ENCODE measurements at regions of chr15 and their contacts with region 1.

Region 1: GRCh38 chr15:100627789-100628395 is 25.5 kb downstream of the ASB7 start:
- DNase-seq: peak; percentile 69
- H3K4me3 ChIP-seq: no peak overlapping the region
- H3K27ac ChIP-seq: no peak overlapping the region
- H3K4me1 ChIP-seq: no peaks in the 10 kb centered on the region
- H3K27me3 ChIP-seq: no peaks in the 10 kb centered on the region
- CTCF ChIP-seq: peak; percentile 82

Region 2: DNA sequence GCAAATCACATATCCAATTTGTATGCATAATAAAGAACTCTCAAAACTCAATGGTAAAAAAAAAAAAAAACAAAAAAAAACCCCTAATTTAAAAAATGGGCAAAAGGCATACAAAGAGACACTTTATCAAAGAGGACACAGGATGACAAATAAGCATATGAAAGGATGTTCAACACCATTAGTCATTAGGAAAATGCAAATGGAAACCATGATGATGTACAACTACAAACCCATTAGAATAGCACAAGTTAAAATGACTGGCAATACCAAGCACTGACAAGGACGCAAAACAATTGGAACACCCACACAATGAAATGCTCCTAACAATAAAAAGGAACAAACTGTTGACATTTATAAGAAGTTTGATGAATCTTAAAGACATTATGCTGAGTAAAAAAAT is 222.7 kb before region 1 on chr15:
- intact Hi-C with region 1: no loop called
- DNase-seq: no peak
- H3K4me3 ChIP-seq: no peak overlapping the region
- H3K27ac ChIP-seq: no peak overlapping the region
- H3K4me1 ChIP-seq: no peaks in the 10 kb centered on the region
- H3K27me3 ChIP-seq: no peaks in the 10 kb centered on the region
- CTCF ChIP-seq: no peak

Region 3: GRCh38 chr15:100759698-100760356 is 131.9 kb after region 1 on chr15:
- intact Hi-C with region 1: no loop called
- DNase-seq: peak; percentile 30
- H3K4me3 ChIP-seq: no peak overlapping the region
- H3K27ac ChIP-seq: peak overlapping the region; percentile 47
- H3K4me1 ChIP-seq: no peaks in the 10 kb centered on the region
- H3K27me3 ChIP-seq: no peaks in the 10 kb centered on the region
- CTCF ChIP-seq: no peak

Region 4: DNA sequence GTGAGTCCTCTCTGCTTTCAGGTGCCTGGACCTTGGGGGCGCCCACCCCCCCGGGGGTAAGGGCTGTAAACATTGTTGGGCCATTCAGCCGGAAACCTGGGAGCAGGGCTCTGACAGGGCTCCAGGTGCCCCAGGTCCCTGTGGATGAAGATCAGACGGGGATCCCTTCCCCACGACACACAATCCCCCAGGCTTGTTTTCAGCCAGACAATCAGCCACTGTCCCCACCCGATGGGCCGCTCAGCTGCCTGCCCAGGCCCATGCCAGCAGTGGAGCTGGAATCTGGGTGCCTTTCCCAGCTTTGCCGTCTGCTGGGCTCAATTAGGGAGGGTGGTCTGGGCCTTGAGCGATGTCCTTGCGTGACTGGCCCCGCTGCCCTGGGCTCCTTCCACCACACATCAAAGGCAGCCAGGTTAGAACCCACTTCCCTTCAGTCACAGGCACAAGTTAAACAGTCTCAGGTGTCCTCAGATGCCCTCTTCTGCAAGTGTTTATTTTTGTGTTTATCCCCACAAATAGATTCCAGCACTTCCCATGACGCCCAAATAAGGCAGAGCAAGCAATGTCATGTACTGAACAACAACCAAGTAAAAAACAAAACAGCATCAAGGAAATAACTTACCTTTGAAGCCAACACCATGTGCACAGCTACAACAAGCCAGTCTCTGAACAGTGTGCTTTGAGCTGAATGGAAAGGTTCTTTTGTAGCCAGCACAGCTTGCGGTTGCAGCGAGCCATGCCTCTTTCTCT is 174.7 kb after region 1 on chr15:
- intact Hi-C with region 1: no loop called
- DNase-seq: peak; percentile 9
- H3K4me3 ChIP-seq: no peak overlapping the region
- H3K27ac ChIP-seq: no peak overlapping the region
- H3K4me1 ChIP-seq: no peaks in the 10 kb centered on the region
- H3K27me3 ChIP-seq: no peaks in the 10 kb centered on the region
- CTCF ChIP-seq: no peak

Region 5: GRCh38 chr15:100873029-100873677 is 245.3 kb after region 1 on chr15:
- intact Hi-C with region 1: loop called (anchors 5 kb)
- DNase-seq: peak; percentile 79
- H3K4me3 ChIP-seq: no peak overlapping the region
- H3K27ac ChIP-seq: no peak overlapping the region
- H3K4me1 ChIP-seq: no peaks in the 10 kb centered on the region
- H3K27me3 ChIP-seq: peaks cover 4% of the 10 kb centered on the region
- CTCF ChIP-seq: peak; percentile 82

Region 6: DNA sequence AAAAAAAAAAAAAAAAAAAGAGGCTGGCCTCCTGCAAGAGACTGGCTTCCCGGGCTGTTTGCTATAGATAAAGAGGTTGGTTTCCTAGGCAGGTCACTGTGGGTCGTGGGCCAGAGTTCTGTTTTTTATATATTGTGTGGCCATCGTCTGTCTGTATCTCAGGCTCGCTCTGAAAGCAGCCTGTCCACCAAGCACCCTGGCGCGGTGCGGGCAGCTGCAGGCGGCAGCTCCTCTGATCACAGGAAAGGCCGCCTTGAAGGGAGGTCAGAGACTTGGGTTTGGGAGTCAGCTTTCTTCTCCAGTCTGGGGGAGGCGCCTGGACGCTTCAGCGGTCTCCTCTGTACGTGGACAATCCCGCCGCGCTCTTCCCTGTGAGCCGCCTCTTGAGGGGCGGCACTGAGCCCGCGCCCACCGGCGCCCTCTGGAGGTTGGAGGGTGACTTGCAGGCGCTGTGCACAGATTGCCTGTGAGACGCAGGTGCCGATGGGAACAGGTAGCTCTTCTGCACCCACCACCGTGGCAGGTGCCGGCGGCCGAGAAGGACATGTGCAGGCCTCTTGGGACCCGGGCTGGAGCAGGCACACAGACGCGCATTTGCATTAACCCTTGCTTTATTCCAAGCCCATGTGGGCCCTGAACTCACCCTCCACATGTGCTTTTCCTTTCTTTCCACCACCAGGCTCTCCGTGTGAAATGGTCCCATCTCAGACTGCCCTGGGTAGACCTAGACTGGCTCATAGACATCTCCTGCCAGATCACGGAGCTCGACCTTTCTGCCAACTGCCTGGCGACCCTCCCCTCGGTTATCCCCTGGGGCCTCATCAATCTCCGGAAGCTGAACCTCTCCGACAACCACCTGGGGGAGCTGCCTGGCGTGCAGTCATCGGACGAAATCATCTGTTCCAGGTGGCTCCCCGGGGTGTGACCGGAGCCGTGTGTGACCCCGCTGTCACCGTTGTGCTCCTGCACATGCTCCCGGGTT is 380.6 kb after region 1 on chr15:
- intact Hi-C with region 1: loop called (anchors 5 kb)
- DNase-seq: peak; percentile 91
- H3K4me3 ChIP-seq: peak overlapping the region; percentile 36
- H3K27ac ChIP-seq: no peak overlapping the region
- H3K4me1 ChIP-seq: peaks cover 4% of the 10 kb centered on the region
- H3K27me3 ChIP-seq: no peaks in the 10 kb centered on the region
- CTCF ChIP-seq: peak; percentile 94

Measured in colonic mucosa (tissue), 4 donors.